ENCODE measurements at regions of chr17 and their contacts with region 1.

Region 1: DNA sequence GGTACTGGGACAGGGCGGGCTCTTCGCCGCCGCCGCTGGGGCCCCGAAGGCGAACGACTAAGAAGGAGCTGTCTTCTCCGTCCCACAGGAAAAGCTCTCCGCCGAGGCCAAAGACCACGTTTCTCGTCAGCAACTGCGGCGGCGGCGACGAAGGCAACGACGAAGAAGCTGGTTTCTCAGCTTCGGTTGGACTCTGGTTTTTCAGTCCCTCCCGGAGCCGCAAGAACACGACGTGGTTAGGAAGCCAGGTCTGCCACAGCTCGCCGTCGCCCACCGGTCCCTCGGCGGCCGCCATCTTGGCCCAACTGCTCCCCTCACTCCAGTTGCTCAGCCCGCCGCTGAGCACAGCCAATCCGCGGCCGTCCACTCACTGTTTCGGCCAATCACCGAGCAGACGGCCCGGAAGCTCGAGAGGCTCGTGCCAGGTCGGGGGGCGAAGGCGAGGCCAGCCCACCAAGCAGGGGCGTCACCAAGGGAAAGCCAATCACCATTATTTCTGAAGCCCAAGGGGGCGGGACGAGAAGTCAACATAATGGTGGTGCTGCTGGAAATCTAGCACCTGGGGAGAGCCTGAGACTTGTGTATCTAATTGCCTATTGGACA is at the start of gene NUP88:
- DNase-seq: peak; percentile 94 to 100 (median 98)

Region 2: GRCh38 chr17:5135726-5136579 is 283.5 kb before region 1 on chr17:
- intact Hi-C with region 1: no loop called
- DNase-seq: peak in 1 of 10 donors; percentile 68

Region 3: GRCh38 chr17:5181509-5182305 is 237.8 kb before region 1 on chr17:
- intact Hi-C with region 1: no loop called
- DNase-seq: no peak

Region 4: DNA sequence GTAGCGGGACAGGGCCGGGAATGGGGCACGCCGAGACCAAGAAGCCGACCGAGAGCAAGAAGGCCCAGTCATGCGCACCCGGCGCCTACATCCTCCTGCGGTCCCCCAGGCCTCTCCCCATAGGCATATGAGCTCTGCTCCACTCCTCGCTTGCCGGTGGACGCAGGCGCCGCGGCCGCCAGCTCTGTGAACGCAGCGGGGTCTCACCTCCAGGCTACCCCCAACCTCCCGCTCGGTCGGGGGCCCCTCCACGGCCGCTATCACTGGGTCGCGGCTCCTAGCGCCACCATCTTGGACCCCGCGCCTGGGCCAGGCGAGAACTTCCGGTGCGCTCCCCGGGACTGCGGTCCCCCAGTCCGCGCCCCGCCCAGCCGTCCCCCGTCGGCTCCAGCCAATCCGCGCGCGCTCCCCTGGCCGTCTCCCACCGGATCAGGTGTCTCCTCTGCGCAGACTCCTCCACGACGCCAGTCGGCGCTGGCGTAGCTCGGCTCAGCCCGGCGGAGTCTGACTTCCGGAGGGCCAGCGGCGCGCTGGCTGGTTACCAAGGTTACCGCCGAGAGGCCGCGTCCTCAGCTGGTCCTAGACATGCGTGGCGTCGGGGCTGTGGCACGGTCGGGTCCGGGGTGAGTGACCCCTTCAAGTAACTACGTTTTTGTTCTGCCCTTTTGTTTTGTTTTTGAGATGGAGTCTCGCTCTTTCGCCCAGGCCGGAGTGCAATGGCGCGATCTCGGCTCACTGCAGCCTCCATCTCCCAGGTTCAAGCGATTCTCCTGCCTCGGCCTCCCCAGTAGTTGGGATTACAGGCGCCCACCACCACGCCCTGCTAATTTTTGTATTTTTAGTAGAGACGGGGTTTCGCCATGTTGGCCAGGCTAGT is 227.7 kb before region 1 on chr17 and contains the start of gene ZNF594:
- intact Hi-C with region 1: no loop called
- DNase-seq: peak; percentile 93 to 99 (median 96)

Region 5: DNA sequence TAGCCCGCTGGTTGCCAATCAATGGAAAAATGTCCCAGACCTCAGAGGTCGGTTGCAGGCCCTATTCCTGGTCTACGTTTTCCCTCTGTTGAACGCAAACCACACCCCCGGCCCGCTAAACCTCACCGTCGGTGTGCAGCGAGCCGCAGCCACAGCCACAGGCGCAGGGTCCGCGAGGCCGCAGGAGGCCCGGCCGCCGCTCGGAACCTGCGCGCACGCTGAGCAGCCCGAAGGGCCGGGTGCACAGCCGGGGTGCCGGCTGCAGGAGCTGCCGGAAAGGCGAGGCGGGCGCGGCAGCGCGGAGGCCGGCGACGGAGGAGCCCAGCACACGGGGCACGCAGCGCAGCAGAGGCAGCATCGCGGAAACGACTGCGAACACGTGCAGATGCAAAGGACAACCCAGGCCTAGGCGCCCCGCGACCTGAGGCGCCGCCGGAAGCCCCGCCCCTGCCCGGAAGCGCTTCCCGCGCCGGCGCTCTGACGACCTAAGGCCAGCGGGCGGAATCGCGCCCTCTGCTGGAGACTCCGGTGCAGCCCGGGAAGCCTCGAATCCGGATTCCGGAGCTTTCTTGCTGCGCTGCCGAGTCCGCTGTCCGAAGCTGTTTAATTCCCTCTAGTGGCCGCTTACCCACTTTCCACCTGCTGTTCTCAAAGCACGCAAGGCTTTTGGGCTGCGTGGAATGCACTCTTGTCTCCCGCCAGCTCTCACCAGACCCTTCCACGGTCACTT is 19.4 kb after region 1 on chr17 and contains the start of gene C1QBP:
- intact Hi-C with region 1: loop called (anchors 1 kb)
- DNase-seq: peak; percentile 84 to 99 (median 90)

Region 6: DNA sequence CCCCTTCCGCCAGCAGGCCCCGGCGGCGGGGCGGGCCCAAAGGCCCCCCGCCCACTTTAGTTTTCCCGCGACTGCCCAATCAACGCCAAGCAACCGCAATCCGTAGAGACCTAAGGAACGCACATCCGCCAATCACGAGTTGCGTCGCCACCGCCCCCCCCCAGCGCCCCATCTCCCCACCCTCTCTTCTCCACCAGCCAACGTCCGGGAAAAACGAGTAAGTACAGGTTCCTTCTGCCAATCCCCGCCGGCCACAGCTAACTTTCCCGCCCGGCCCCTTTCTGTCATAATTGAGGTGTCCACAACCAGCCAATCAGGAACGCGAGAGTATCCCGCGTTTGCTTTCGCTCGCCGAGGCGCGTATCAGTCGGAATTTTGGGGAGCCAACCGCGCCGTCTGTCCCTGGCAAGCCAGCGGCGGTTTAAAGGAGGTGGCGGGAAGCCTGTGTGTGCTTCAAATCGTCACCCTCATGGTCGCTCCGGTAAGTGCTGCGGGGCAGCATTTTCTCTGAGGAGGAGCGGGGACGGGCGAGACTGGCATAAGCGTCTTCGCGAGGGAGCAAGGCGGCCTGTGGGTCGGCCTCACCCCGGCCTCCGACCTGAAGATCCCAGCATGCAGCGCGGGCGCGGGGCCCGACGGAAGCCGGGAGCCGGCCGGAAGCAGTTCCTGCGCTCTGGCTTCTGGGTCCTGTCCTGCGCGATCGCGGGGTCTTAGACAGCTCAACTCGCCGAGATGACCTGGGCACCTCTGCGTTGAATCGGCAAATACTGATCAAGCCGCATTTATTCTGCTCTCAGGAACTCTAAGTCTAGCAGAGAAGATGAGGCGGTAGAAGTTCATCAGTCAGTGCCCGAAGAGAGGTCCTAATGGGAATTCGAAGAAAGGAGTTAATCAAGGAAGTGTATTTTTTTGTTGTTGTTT is 67.0 kb after region 1 on chr17 and contains the start of gene MIS12:
- intact Hi-C with region 1: loop called (anchors 1 kb)
- DNase-seq: peak; percentile 94 to 100 (median 98)

Region 7: GRCh38 chr17:5592382-5592781 is 172.9 kb after region 1 on chr17:
- intact Hi-C with region 1: no loop called
- DNase-seq: no peak

Measured in posterior cingulate gyrus (tissue), 11 donors.